CD8-positive, alpha-beta memory T cell (primary cell): ENCODE measurements at regions of chr2 and their contacts with region 1.

Region 1: DNA sequence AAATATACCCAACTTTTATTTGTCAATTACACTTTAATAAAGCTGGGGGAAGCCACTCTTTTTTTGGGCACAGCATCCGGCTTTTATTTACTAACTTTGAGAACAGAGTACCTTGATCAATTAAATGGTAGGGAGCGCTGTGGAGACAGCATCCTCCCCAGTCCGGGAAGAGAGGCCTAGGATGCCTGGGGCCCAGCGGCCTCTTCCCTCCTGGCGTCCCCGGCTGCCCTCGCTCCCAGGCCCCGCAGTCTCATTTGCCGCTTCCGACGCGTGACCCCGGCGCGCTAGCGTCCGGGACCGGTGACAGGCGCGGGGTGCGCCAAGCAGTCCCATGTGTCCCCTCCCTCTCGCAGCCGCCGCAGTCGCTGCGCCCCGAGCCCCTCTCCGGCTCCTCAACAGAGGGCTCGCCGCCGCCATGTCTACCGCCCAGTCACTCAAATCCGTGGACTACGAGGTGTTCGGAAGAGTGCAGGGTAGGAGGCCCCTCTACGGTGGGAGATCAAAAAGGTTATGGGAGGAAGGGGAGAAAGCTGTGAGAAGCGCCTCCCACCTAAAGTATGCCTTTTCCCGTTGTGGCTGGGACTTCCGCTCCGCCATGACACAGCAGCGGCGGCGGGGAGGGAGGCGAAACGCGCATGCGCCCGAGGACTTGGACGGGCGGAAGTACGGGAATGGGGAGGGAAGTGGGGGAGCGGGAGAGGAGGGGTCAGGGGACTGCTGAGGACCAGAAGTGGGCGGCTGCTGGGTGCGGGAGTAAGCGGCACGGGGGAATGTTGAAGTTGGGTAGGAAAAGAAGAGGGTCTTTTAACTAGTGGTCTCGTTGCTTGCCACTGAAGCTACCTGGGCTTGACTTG is at the start of gene ACYP2:
- DNase-seq: peak; percentile 87 to 95 (median 91)
- H3K4me3 ChIP-seq: peak within 1 kb of the TSS; percentile 84
- H3K4me3 Mint-ChIP-seq: peak within 1 kb of the TSS; percentile 93 to 99 (median 97)
- H3K27ac ChIP-seq: peak within 1 kb of the TSS; percentile 97
- H3K27ac Mint-ChIP-seq: peak within 1 kb of the TSS; percentile 96 to 100 (median 99)
- H3K4me1 ChIP-seq: peaks cover 15% of the 10 kb centered on the region
- H3K4me1 Mint-ChIP-seq: peaks cover 19 to 27% (median 27%) of the 10 kb centered on the region in 3 donors
- H3K27me3 ChIP-seq: no peaks in the 10 kb centered on the region
- H3K27me3 Mint-ChIP-seq: peaks cover 3% of the 10 kb centered on the region in 2 donors
- total RNA-seq, gene ACYP2: 8.8 to 10.3 TPM

Region 2: DNA sequence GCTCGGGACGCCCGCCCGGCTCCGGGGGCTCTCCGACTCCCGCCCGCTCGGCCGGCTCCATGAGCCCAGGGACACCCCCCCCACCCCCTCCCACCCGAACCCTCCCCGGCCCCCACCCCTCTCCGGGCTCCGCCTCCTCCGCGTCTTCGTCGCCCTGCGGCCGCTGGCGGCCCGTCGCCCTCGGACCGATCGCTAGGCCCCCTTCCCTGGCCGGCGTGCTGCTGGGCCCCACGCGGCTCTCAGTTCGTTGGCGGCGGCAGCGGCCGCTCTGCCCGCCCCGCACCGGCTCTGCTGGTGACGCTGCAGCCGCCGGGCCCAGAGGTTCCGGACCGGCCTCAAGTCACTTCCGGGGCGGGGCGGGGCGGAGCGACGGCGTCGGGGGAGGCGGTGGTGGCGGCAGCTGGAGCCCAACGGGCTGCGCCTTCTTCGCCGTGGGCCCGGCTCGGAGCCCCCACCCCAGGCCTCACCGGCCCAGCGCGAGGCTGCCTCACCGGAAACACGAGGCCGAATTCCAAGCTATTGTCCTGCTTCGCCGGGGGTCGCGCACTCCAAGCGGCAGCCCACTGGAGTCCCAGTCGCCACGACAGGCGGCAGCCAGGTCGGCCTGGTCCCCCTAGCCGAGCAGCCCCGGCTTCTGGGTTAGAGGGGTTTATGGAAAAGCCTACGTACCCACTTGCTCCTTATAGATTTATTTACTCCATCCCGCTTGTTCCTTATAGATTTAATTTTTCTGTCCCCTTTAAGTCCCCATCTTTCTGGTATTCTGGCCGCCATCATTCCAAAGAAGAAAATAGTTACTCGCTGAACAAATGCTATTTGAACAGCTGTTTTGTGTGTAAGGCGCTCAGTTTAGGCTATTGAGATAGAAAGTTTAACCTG is 144.5 kb before region 1 on chr2 and contains the start of gene PSME4:
- CTCF ChIA-PET with region 1: no interaction called
- POLR2A ChIA-PET with region 1: interaction called, 10 read pairs
- DNase-seq: peak; percentile 88 to 95 (median 92)
- H3K4me3 ChIP-seq: peak within 1 kb of the TSS; percentile 87
- H3K4me3 Mint-ChIP-seq: peak within 1 kb of the TSS; percentile 89 to 97 (median 94)
- H3K27ac ChIP-seq: peak within 1 kb of the TSS; percentile 92
- H3K27ac Mint-ChIP-seq: peak within 1 kb of the TSS; percentile 94 to 99 (median 96)
- H3K4me1 ChIP-seq: peaks cover 38% of the 10 kb centered on the region
- H3K4me1 Mint-ChIP-seq: peaks cover 53 to 63% (median 56%) of the 10 kb centered on the region in 3 donors
- H3K27me3 ChIP-seq: no peaks in the 10 kb centered on the region
- H3K27me3 Mint-ChIP-seq: no peaks in the 10 kb centered on the region
- total RNA-seq, gene PSME4: 48.0 to 49.9 TPM

Region 3: DNA sequence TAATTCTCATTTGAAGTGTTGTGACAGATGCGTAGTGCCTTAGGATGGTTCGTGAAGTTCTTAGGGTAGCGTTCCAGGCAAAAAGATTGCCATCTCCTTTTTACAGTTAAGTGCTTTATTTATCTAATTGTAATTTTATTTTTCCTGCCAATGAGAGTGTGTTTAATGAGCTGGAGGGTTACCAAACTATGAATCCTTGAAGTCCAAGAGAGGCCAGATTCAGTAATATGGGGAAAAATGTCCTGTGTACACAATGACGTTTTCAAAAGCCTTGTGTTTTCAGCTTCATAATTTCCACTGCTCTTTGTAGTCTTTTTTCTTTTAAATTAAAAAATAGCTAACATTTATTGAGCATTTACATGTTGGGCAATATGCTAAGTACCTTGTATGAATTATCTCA is 23.7 kb after region 1 on chr2:
- CTCF ChIA-PET with region 1: no interaction called
- POLR2A ChIA-PET with region 1: no interaction called
- DNase-seq: no peak
- H3K4me3 ChIP-seq: no peak overlapping the region
- H3K4me3 Mint-ChIP-seq: no peak overlapping the region
- H3K27ac ChIP-seq: no peak overlapping the region
- H3K27ac Mint-ChIP-seq: no peak overlapping the region
- H3K4me1 ChIP-seq: no peaks in the 10 kb centered on the region
- H3K4me1 Mint-ChIP-seq: no peaks in the 10 kb centered on the region
- H3K27me3 ChIP-seq: no peaks in the 10 kb centered on the region
- H3K27me3 Mint-ChIP-seq: no peaks in the 10 kb centered on the region